ENCODE measurements at regions of chr7 and their contacts with region 1.

Region 1: DNA sequence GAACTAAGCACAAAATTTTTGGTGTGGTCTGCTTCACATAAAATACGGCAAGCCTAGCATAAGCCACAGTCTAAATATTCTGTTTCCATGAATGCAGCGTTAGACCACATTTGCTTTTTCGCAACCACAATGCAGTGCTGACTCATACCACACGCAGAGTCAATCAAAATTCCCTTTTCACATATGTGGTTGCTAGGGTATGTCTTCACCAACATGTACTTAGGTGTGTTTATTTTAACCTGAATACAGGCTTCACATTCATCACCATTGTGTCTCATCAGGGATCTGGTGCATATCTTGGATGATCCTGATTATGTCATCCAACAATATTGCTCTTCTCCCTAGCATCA is 90.8 kb downstream of the CHN2 start:
- H3K4me3 Mint-ChIP-seq: no peak overlapping the region
- H3K27ac Mint-ChIP-seq: peak overlapping the region; percentile 75
- H3K4me1 Mint-ChIP-seq: peaks cover 83% of the 10 kb centered on the region
- H3K27me3 Mint-ChIP-seq: no peaks in the 10 kb centered on the region

Region 2: DNA sequence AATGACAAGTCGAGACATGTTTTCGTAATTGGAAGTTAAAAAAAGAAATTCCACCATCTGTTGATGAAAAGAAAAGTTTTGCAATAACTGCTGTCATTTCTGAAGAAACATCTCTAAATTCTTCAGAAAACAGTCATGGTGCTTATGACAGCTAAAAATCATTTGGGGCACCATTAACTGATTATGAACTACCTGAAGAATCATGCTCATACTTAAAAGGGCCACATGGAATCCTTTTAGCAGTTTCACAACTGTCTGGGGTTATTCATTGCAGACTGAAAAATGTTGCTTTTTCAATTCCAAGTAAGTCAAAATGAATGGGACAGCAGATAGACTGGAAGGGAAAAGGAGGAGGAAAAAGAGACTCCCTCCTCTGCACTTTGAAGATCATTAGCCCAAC is 43.4 kb after region 1 on chr7:
- intact Hi-C with region 1: loop called (anchors 5 kb)
- H3K4me3 Mint-ChIP-seq: no peak overlapping the region
- H3K27ac Mint-ChIP-seq: peak overlapping the region; percentile 79
- H3K4me1 Mint-ChIP-seq: peaks cover 87% of the 10 kb centered on the region
- H3K27me3 Mint-ChIP-seq: no peaks in the 10 kb centered on the region